Sciatic nerve (tissue), 2 donors: ENCODE measurements at regions of chr3 and their contacts with region 1.

Region 1: DNA sequence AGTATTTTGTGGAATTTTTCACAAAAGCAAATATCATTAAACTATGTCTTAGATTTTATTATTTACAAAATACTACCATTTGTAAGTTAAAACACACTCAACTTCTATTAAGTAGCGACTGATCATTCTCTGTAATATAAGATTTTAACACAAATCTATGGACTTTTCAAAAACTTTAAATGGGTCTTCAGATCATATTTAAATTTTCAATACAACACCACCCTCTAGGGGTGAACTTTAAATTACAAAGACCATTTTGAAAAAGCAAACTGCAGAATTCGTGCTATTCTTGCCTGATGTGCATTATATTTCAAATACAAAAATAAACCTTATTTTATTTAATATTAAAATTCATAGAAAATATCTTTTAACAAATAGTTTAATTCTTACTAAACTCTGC is 8.2 kb upstream of the VGLL4 start:
- DNase-seq: no peak
- ATAC-seq: no peak

Region 2: DNA sequence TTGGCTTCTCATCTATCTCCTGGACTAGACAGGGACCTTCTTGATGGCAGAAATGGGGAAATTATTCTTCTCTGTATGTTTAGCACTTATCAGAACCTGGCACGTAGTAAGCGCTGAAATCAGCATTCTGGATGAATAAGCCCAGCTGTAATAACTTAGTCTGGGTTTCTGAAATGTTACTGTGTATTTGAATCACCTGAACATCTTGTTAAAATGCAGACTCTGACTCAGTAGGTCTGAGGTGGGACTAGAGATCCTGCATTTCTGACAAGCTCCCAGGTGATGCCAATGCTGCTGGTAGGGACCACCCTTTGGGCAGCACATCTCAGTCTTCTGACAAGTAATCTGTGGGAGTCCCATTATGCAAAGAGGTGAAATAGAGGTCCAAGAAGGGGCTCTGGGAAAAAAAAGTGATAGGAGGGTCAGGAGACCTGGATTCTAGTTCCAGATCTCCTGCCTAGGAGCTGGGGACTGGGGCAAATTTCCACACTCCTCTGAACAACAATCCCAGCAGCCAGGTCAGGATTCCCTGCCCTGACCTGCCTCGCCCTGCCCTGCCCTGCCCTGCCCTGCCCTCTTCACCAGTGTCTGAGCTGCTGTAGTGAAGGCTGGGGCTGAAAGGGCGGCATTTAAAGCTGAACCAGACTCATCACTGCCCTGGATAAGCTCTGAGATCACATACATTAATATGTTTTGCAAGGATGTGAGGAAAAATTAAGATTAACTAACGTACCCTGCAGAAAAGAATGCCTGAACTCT is 853.1 kb before region 1 on chr3:
- intact Hi-C with region 1: no loop called
- DNase-seq: no peak
- ATAC-seq: no peak

Region 3: DNA sequence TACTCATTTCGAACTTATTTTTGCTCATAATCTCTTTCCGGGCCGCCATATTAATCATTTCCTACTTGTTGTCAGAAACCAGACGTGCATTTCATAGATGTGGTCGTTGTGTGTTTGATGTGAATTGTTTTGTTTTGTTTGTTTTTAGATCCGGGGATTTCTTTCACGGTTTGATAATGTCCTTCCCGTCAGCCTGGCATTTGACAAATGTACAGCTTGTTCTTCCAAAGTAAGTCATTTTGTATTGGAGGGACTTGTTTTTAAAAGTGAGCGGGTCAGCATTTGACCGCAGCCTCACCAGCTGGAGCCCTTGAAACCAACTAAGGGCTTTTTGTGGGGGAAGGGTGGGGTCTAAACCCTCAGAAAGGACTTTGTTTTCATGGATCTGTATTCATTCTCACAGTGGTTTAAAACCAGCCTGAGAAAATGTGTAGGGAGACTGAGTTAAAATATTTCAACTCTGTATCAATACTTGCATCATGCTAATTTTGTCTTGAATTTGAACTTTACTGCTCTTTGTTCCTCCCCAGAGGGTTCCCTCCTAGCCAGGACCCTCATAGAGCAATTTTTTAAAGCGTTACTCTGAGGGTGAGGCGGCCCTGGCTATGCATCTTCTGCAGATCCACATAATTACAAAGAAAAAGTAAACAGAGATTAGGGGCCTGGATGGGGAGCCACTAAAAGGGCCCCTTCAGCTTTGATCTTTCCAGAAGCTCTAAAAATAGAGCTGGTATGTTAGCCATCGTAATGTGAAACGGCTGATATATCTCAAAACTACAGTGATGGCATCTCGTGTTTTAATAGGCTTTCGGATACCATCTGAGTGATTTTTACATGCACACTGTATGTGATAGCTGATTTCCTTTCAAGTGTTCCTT is 271.8 kb before region 1 on chr3:
- intact Hi-C with region 1: loop called (anchors 2 kb)
- DNase-seq: no peak
- ATAC-seq: no peak

Region 4: GRCh38 chr3:11415099-11415498 is 236.8 kb before region 1 on chr3:
- intact Hi-C with region 1: no loop called
- DNase-seq: no peak
- ATAC-seq: no peak

Region 5: DNA sequence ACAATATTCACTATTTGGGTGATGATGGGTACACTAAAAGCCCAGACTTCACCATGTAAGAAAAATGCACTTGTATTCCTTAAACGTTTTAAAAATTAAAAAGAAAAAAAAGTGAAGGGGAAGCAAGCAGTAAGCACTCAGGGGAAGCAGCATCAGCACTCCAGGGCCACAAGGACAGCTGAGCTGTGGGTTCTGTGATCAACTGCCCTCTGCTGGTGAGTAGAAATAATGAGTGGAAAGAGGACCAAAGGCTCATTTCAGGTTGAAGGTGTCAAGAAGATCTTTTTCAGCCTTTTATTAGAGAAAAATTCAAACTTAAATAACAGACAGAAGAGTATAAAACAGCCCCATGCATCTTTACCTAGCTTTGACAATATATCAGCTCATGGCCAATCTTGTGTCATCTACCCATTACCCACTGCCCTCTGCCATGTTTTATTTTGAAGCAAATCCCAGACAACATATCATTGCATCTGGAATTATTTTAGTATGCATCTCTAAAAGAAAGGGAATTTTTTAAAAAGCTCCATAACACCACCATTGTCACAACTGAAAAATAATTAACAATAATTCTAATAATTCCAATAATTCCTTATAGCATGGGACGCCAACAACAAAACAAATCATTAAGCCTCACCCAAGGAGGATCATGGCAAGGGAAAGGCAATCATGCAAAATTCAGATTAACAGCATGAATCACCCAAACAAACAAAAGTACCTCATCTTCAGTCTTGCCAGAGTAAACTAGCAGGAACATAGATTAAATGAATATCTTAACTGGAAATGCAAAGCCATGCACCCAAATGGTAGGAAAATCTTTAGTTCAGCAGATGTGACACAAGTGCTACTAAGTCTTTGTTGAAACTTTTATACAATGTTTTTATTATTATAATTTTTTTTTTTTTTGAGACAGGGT is 152.3 kb after region 1 on chr3:
- intact Hi-C with region 1: loop called (anchors 10 kb)
- DNase-seq: no peak
- ATAC-seq: peak; percentile 82